ENCODE measurements at regions of chr3 and their contacts with region 1.

Region 1: GRCh38 chr3:171248425-171249111 is 211.6 kb downstream of the TNIK start:
- DNase-seq: peak in 1 of 9 experiments; percentile 31
- ATAC-seq: peak; percentile 54
- H3K4me3 ChIP-seq: no peak overlapping the region
- H3K4me3 Mint-ChIP-seq: no peak overlapping the region
- H3K27ac ChIP-seq: peak overlapping the region in 1 of 2 experiments; percentile 35
- H3K27ac Mint-ChIP-seq: no peak overlapping the region
- H3K4me1 ChIP-seq: peaks cover 48% of the 10 kb centered on the region
- H3K4me1 Mint-ChIP-seq: peaks cover 31% of the 10 kb centered on the region
- H3K27me3 ChIP-seq: no peaks in the 10 kb centered on the region
- H3K27me3 Mint-ChIP-seq: no peaks in the 10 kb centered on the region
- CTCF ChIP-seq: no peak

Region 2: DNA sequence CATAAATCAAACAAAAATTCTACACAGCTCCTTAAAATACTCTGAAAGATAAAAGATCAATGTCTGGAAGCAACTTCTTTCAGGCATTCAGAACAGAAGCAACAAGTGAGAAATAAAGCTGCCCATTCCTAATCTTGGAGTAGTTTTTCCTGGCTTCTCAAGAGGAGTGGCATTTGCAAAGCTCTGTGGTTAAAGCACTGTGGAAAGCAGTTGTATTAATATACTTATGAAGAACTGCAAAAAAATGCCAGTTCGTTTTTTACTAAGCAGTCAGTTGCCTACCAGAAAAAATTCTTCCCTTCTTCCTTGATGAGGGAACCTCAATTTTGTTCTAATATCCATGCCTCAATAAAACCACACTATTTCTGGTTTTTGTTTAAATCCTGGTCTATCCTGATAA is 13.9 kb after region 1 on chr3:
- CTCF ChIA-PET with region 1: no interaction called
- POLR2A ChIA-PET with region 1: interaction called, 3 read pairs
- intact Hi-C with region 1: loop called in 1 of 2 experiments (anchors 2 kb)
- DNase-seq: no peak
- ATAC-seq: no peak
- H3K4me3 ChIP-seq: no peak overlapping the region
- H3K4me3 Mint-ChIP-seq: no peak overlapping the region
- H3K27ac ChIP-seq: no peak overlapping the region
- H3K27ac Mint-ChIP-seq: peak overlapping the region; percentile 14
- H3K4me1 ChIP-seq: peaks cover 35% of the 10 kb centered on the region
- H3K4me1 Mint-ChIP-seq: peaks cover 82% of the 10 kb centered on the region
- H3K27me3 ChIP-seq: no peaks in the 10 kb centered on the region
- H3K27me3 Mint-ChIP-seq: no peaks in the 10 kb centered on the region
- CTCF ChIP-seq: no peak

Measured in CD8-positive, alpha-beta T cell (primary cell).